CD8-positive, alpha-beta T cell (primary cell): ENCODE measurements at regions of chr4 and their contacts with region 1.

Region 1: DNA sequence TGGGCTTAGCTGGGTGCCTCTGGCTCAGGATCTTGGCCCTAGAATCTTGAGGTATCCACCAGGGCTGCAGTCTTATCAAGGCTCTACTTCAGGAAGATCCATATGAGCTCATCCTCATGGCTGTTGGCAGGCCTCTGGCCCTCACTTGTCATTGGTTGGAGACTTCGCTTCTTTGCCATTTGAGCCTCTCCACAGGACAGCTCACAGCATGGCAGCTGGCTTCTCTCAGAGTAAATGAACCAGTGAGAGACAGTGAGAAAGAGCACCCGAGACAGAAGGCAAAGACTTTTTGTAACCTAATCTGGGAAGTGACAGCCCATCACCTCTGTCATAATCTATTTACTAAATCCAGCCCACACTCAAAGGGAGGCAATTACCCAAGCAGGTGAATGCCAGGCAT is 236.8 kb downstream of the GPAT3 start:
- DNase-seq: no peak
- ATAC-seq: no peak
- H3K4me3 ChIP-seq: no peak overlapping the region
- H3K4me3 Mint-ChIP-seq: no peak overlapping the region
- H3K27ac ChIP-seq: no peak overlapping the region
- H3K27ac Mint-ChIP-seq: no peak overlapping the region
- H3K4me1 ChIP-seq: no peaks in the 10 kb centered on the region
- H3K4me1 Mint-ChIP-seq: no peaks in the 10 kb centered on the region
- H3K27me3 ChIP-seq: peaks cover 0 to 3% of the 10 kb centered on the region in 2 experiments
- H3K27me3 Mint-ChIP-seq: peaks cover 3% of the 10 kb centered on the region
- CTCF ChIP-seq: no peak

Region 2: DNA sequence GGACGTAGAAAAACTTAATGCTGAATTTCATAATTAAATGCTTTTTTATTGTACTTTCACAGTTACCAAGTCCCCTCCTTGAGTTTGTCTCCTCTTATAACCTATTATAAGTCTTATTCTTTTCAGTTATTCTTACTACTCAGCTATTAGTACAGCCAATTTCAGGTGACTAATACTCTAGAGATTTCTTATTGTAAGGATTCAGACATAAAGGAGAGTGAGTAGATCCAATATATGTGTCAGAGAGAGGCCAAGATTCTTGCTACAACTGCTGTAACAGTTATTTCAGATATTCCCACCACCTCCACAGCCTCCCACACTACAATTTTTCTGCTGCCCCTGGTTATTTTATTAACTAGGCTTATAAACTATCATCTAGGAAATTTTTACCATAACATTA is 37.7 kb after region 1 on chr4:
- CTCF ChIA-PET with region 1: no interaction called
- POLR2A ChIA-PET with region 1: no interaction called
- intact Hi-C with region 1: no loop called
- DNase-seq: no peak
- ATAC-seq: no peak
- H3K4me3 ChIP-seq: no peak overlapping the region
- H3K4me3 Mint-ChIP-seq: no peak overlapping the region
- H3K27ac ChIP-seq: no peak overlapping the region
- H3K27ac Mint-ChIP-seq: no peak overlapping the region
- H3K4me1 ChIP-seq: no peaks in the 10 kb centered on the region
- H3K4me1 Mint-ChIP-seq: no peaks in the 10 kb centered on the region
- H3K27me3 ChIP-seq: no peaks in the 10 kb centered on the region
- H3K27me3 Mint-ChIP-seq: no peaks in the 10 kb centered on the region
- CTCF ChIP-seq: no peak

Region 3: DNA sequence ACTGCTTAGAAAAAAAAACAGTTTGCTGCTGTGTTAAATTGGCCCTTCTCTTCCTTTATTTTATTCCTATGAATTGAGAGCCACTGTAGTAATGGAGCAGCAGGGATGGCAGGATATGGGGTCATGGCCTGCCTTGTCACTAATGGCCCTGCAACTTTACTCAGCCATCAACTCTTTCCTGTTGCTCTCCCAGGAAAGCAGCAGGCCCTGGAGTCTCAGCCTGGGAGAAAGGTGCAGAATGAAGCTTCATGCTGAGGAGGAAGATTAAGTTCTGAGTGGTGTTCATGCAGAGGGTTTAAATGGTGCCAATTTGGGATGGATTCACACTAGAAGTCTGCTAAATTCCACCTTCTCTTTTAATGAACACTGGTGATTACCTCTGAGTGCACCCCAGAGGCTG is 48.8 kb after region 1 on chr4:
- CTCF ChIA-PET with region 1: no interaction called
- POLR2A ChIA-PET with region 1: no interaction called
- intact Hi-C with region 1: loop called in 1 of 2 experiments (anchors 1 kb)
- DNase-seq: no peak
- ATAC-seq: no peak
- H3K4me3 ChIP-seq: no peak overlapping the region
- H3K4me3 Mint-ChIP-seq: no peak overlapping the region
- H3K27ac ChIP-seq: no peak overlapping the region
- H3K27ac Mint-ChIP-seq: no peak overlapping the region
- H3K4me1 ChIP-seq: no peaks in the 10 kb centered on the region
- H3K4me1 Mint-ChIP-seq: no peaks in the 10 kb centered on the region
- H3K27me3 ChIP-seq: no peaks in the 10 kb centered on the region
- H3K27me3 Mint-ChIP-seq: no peaks in the 10 kb centered on the region
- CTCF ChIP-seq: no peak

Region 4: GRCh38 chr4:84159762-84160161 is 387.1 kb after region 1 on chr4:
- CTCF ChIA-PET with region 1: no interaction called
- POLR2A ChIA-PET with region 1: no interaction called
- intact Hi-C with region 1: no loop called
- DNase-seq: no peak
- ATAC-seq: no peak
- H3K4me3 ChIP-seq: no peak overlapping the region
- H3K4me3 Mint-ChIP-seq: no peak overlapping the region
- H3K27ac ChIP-seq: no peak overlapping the region
- H3K27ac Mint-ChIP-seq: no peak overlapping the region
- H3K4me1 ChIP-seq: no peaks in the 10 kb centered on the region
- H3K4me1 Mint-ChIP-seq: no peaks in the 10 kb centered on the region
- H3K27me3 ChIP-seq: no peaks in the 10 kb centered on the region
- H3K27me3 Mint-ChIP-seq: no peaks in the 10 kb centered on the region
- CTCF ChIP-seq: no peak